ENCODE measurements at regions of chr9 and their contacts with region 1.

Region 1: DNA sequence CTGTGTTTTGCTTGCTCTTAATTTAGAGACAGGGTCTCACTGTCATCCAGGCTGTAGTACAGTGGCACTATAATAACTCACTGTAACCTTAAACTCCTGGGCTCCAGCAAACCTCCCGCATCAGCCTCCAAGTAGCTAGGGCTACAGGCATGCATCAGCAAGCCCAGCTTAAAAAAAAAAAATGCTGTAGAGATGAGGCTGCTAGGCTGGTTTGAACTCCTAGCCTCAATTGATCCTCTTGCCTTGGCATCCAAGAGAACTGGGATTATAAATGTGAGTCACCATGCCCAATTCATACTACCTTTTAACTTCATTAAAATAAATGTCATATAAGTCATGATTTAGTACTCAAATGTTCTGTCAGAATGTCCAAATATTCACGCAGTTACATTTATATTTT is 2195.7 kb upstream of the C9orf72 start:
- DNase-seq: no peak
- ATAC-seq: no peak
- H3K4me3 ChIP-seq: no peak overlapping the region
- H3K27ac ChIP-seq: no peak overlapping the region
- H3K4me1 ChIP-seq: no peaks in the 10 kb centered on the region
- H3K27me3 ChIP-seq: no peaks in the 10 kb centered on the region
- CTCF ChIP-seq: no peak

Region 2: GRCh38 chr9:29701551-29701950 is 67.5 kb before region 1 on chr9:
- intact Hi-C with region 1: loop called in 1 of 2 experiments (anchors 10 kb)
- DNase-seq: no peak
- ATAC-seq: no peak
- H3K4me3 ChIP-seq: no peak overlapping the region
- H3K27ac ChIP-seq: no peak overlapping the region
- H3K4me1 ChIP-seq: no peaks in the 10 kb centered on the region
- H3K27me3 ChIP-seq: no peaks in the 10 kb centered on the region
- CTCF ChIP-seq: no peak